Activated CD4-positive, alpha-beta T cell treated with anti-CD3 and anti-CD28 coated beads for 36 hours (primary cell): ENCODE measurements at regions of chr9 and their contacts with region 1.

Region 1: DNA sequence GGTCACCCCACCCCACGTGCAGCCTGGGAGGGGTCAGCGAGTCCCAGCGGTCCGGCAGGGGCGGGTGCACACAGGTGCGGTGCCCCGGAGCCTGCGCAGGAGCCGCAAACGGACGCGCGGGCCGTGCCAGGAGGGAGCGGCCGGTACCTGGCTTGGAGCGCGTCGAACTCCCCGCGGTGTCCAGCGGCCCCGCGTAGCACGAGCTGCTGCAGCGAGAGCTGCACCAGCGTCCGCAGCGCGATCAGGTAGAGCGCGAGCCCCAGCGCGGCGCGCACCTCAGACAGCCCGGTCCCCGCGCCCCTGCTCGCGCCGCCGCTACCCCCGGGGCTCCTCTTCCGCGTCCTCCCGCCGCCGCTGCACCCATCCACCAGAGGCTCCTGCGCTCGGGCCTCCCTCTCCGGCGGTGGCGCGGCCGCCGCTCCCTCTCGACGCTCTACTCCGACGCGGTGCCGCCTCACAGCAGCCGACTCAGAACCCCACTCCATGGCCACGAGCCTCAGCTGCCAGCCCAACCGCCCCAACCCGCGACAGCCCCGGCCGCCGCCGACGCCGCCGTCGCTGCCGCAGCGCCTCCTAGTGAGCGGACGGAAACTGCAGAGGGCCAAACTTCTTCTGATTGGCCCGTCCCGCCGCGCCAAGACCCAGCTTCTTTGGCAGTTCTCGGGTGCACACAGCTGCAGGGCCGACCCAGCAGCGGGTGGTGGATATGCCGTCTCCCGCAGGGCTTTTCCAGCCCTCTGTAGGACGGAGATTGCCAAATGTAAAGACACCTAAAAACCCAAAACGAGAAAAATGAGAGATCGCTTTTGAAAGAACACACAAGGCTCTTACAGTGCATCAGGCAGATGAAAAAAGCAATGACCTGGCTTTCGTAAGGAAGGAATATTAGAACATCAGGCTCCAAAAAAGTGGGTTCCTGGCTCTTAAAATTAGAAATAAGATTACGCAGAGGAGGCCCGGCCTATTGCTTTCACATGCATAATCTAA is at the start of gene ERMP1:
- DNase-seq: peak; percentile 94
- ATAC-seq: peak; percentile 88
- H3K4me3 Mint-ChIP-seq: peak within 1 kb of the TSS; percentile 91
- H3K27ac Mint-ChIP-seq: peak within 1 kb of the TSS; percentile 84
- H3K4me1 Mint-ChIP-seq: peaks cover 48% of the 10 kb centered on the region
- H3K27me3 Mint-ChIP-seq: no peaks in the 10 kb centered on the region
- total RNA-seq, gene ERMP1: 13.3 to 13.9 TPM

Region 2: DNA sequence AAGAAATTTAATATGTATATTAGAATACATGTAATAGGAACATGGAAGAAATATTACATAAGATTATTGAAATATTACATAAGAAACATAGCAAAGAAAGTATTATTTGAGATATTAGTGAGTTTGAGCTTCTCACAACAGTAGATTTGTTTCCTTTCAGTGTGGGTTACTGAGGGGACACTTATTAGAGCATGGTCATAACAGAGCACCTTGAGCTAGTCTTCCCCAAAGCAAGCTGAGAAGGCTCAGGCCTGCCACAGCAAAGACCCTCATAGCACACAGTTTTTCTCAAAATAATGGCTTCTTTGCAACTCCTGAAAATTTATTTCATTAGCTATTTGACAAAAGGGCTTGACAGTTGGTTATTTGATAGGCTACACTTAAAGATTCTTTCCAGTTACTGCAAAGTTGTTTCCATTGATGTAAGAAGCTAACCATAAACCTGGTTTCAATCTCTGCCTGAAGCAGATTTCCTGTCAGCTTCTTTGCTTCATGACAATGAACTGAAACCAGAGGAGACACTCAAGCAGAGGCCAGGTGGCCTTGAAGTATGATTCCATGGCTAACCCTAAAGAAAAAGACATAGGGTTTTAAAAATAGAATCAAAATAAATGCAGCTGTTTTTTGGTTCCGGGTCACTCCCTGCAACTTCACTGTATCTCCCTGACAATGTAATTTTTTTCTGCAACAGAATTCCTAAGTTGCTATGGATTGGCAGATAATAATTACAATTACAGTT is 68.5 kb before region 1 on chr9:
- CTCF ChIA-PET with region 1: interaction called, 13 read pairs
- POLR2A ChIA-PET with region 1: no interaction called
- intact Hi-C with region 1: loop called (anchors 1 to 5 kb)
- DNase-seq: peak; percentile 31
- ATAC-seq: peak; percentile 65
- H3K4me3 Mint-ChIP-seq: no peak overlapping the region
- H3K27ac Mint-ChIP-seq: peak overlapping the region; percentile 77
- H3K4me1 Mint-ChIP-seq: peaks cover 62% of the 10 kb centered on the region
- H3K27me3 Mint-ChIP-seq: no peaks in the 10 kb centered on the region

Region 3: GRCh38 chr9:5786370-5787127 is 46.3 kb before region 1 on chr9:
- CTCF ChIA-PET with region 1: no interaction called
- POLR2A ChIA-PET with region 1: no interaction called
- intact Hi-C with region 1: loop called in 1 of 2 experiments (anchors 5 kb)
- DNase-seq: no peak
- ATAC-seq: no peak
- H3K4me3 Mint-ChIP-seq: no peak overlapping the region
- H3K27ac Mint-ChIP-seq: peak overlapping the region; percentile 4
- H3K4me1 Mint-ChIP-seq: peaks cover 50% of the 10 kb centered on the region
- H3K27me3 Mint-ChIP-seq: no peaks in the 10 kb centered on the region

Region 4: DNA sequence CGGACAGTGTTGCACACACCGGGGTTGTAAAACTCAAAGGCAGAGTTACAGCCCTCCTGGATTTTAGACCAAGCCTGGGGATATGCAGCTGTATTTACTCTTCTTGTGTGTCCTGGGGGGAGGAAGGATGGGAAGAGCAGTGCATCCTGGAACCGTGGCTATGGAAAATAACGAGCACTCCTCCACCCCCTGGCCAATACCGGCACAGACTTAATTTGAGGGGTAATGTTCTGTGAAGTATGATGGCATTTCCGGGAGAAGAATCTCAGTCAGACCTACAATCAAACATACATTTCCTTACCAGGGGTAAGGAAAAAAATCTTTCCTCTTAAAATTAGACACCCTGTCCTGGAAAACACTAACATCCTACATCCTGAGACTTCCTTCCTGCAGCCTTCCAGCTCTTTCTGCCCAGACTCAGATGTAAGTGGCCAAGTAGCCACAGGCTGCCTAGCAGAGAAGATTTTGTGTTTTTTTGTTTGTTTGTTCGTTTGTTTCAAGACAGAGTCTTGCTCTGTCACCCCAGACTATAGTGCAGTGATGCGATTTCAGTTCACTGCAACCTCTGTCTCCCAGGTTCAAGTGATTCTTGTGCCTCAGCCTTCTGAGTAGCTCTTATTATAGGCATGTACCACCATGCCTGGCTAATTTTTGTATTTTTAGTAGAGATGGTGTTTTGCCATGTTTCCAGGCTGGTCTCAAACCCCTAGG is 11.1 kb after region 1 on chr9:
- CTCF ChIA-PET with region 1: interaction called, 21 read pairs
- POLR2A ChIA-PET with region 1: interaction called, 3 read pairs
- intact Hi-C with region 1: no loop called
- DNase-seq: no peak
- ATAC-seq: no peak
- H3K4me3 Mint-ChIP-seq: peak overlapping the region; percentile 26
- H3K27ac Mint-ChIP-seq: peak overlapping the region; percentile 45
- H3K4me1 Mint-ChIP-seq: peaks cover 58% of the 10 kb centered on the region
- H3K27me3 Mint-ChIP-seq: no peaks in the 10 kb centered on the region

Region 5: GRCh38 chr9:5851445-5851844 is 18.6 kb after region 1 on chr9:
- CTCF ChIA-PET with region 1: interaction called, 24 read pairs
- POLR2A ChIA-PET with region 1: no interaction called
- intact Hi-C with region 1: loop called in 1 of 2 experiments (anchors 1 kb)
- DNase-seq: peak; percentile 65
- ATAC-seq: peak; percentile 87
- H3K4me3 Mint-ChIP-seq: no peak overlapping the region
- H3K27ac Mint-ChIP-seq: peak overlapping the region; percentile 44
- H3K4me1 Mint-ChIP-seq: peaks cover 42% of the 10 kb centered on the region
- H3K27me3 Mint-ChIP-seq: no peaks in the 10 kb centered on the region

Region 6: DNA sequence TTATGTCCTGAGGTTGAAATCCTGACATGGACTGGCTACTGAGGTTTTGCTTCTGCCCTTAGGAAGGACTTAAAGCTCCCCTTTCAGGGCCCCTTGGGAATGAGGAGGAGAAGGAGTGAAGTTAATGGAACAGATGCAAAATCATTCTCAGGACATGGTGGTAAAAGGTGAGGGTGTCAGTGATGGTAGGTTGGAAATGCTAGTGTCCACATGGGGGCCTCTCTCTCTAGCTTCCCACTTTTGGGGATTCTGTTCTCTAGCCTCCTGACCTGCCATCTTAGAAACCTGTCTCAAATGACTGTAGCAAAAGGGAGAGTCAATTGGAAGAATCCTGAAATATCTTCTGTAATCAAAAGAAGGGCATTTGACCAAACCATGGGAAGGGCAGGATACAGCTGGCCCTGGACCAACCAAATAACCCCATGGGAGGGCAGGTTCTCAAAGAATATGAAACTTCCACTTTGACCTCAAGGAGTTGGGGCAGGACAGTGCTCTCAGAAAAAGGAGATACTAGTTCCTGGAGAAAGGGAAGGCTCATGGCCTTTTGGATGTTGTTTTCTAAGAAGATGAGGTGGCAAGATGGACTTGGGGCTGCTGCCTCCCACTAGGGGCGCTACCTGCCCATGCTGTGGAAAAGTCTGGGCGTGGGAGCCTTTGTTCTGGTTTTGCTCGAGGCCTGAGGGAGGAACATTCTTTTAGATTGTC is 36.6 kb after region 1 on chr9:
- CTCF ChIA-PET with region 1: interaction called, 11 read pairs
- POLR2A ChIA-PET with region 1: no interaction called
- intact Hi-C with region 1: no loop called
- DNase-seq: peak; percentile 61
- ATAC-seq: peak; percentile 49
- H3K4me3 Mint-ChIP-seq: no peak overlapping the region
- H3K27ac Mint-ChIP-seq: peak overlapping the region; percentile 25
- H3K4me1 Mint-ChIP-seq: peaks cover 4% of the 10 kb centered on the region
- H3K27me3 Mint-ChIP-seq: no peaks in the 10 kb centered on the region